Left ventricle myocardium inferior (tissue), 1 donor: ENCODE measurements at regions of chr20 and their contacts with region 1.

Region 1: DNA sequence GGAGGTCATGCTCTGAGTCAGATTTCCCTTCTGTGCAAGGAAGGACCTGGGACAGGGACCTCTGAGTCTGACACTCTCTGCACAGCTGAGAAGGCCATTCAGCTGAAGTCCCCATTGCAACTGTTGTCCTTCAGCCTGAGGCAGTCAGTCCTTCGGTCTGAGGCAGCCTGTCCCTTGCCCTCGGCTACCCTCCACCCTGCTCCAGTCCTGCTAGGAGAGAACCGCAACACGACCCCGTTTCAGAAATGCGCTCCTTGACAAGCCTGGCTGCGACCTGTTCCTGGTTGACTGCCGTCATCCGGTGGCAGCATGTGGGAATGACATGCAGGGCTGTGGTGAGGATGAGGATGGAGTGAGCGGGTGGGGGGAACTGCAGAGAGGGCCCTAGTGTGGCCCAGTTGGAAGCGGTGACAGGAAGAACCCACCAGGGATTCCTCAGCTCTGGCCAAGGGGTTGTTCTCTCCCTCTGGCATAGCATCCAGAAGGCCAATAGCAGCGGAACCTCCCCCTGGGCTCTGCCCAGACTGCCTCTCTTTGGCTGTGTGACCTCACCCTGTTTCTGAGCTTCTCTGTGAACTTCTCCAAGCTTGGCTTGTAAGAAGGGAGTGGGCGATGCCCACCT is 40.3 kb upstream of the ANGPT4 start:
- DNase-seq: peak; percentile 57
- H3K4me3 ChIP-seq: no peak overlapping the region
- H3K27ac ChIP-seq: no peak overlapping the region
- H3K4me1 ChIP-seq: no peaks in the 10 kb centered on the region
- H3K27me3 ChIP-seq: peaks cover 92% of the 10 kb centered on the region
- CTCF ChIP-seq: peak; percentile 96

Region 2: GRCh38 chr20:796921-797320 is 159.5 kb before region 1 on chr20:
- intact Hi-C with region 1: no loop called
- DNase-seq: no peak
- H3K4me3 ChIP-seq: no peak overlapping the region
- H3K27ac ChIP-seq: no peak overlapping the region
- H3K4me1 ChIP-seq: no peaks in the 10 kb centered on the region
- H3K27me3 ChIP-seq: peaks cover 27% of the 10 kb centered on the region
- CTCF ChIP-seq: no peak

Region 3: GRCh38 chr20:815914-816606 is 140.4 kb before region 1 on chr20:
- intact Hi-C with region 1: loop called (anchors 5 kb)
- DNase-seq: peak; percentile 46
- H3K4me3 ChIP-seq: no peak overlapping the region
- H3K27ac ChIP-seq: no peak overlapping the region
- H3K4me1 ChIP-seq: peaks cover 6% of the 10 kb centered on the region
- H3K27me3 ChIP-seq: peaks cover 51% of the 10 kb centered on the region
- CTCF ChIP-seq: peak; percentile 99

Region 4: DNA sequence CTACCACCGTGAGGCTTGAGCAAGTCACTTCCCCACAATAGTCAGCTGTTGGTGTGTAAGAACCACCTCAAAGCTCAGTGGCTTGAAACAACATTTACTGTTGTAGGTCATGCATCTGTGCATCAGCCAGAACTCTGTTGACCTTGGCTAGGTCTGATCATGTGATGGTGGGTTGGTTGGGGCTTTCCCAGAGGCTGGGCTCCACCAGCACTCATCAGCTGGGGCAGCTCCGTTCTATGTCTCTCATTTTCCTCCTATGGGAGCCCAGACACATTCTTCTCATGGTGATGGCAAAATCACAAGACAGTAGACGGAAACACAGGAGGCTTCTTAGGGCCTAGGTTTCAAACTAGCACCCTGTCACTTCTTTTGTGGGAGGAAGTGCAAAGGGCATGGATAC is 119.2 kb after region 1 on chr20:
- intact Hi-C with region 1: no loop called
- DNase-seq: no peak
- H3K4me3 ChIP-seq: no peak overlapping the region
- H3K27ac ChIP-seq: no peak overlapping the region
- H3K4me1 ChIP-seq: no peaks in the 10 kb centered on the region
- H3K27me3 ChIP-seq: no peaks in the 10 kb centered on the region
- CTCF ChIP-seq: no peak

Region 5: GRCh38 chr20:1144401-1145172 is 188.1 kb after region 1 on chr20:
- intact Hi-C with region 1: no loop called
- DNase-seq: no peak
- H3K4me3 ChIP-seq: no peak overlapping the region
- H3K27ac ChIP-seq: no peak overlapping the region
- H3K4me1 ChIP-seq: peaks cover 25% of the 10 kb centered on the region
- H3K27me3 ChIP-seq: no peaks in the 10 kb centered on the region
- CTCF ChIP-seq: no peak